ENCODE measurements at regions of chr11 and their contacts with region 1.

Region 1: GRCh38 chr11:85694386-85694980 is 8.5 kb upstream of the CCDC89 start:
- DNase-seq: no peak
- H3K4me3 ChIP-seq: no peak overlapping the region
- H3K27ac ChIP-seq: no peak overlapping the region
- H3K4me1 ChIP-seq: no peaks in the 10 kb centered on the region
- H3K27me3 ChIP-seq: no peaks in the 10 kb centered on the region
- CTCF ChIP-seq: peak; percentile 65

Region 2: GRCh38 chr11:85737748-85738147 is 43.3 kb after region 1 on chr11:
- intact Hi-C with region 1: no loop called
- DNase-seq: no peak
- H3K4me3 ChIP-seq: no peak overlapping the region
- H3K27ac ChIP-seq: peak overlapping the region; percentile 27
- H3K4me1 ChIP-seq: peaks cover 48% of the 10 kb centered on the region
- H3K27me3 ChIP-seq: no peaks in the 10 kb centered on the region
- CTCF ChIP-seq: no peak

Region 3: DNA sequence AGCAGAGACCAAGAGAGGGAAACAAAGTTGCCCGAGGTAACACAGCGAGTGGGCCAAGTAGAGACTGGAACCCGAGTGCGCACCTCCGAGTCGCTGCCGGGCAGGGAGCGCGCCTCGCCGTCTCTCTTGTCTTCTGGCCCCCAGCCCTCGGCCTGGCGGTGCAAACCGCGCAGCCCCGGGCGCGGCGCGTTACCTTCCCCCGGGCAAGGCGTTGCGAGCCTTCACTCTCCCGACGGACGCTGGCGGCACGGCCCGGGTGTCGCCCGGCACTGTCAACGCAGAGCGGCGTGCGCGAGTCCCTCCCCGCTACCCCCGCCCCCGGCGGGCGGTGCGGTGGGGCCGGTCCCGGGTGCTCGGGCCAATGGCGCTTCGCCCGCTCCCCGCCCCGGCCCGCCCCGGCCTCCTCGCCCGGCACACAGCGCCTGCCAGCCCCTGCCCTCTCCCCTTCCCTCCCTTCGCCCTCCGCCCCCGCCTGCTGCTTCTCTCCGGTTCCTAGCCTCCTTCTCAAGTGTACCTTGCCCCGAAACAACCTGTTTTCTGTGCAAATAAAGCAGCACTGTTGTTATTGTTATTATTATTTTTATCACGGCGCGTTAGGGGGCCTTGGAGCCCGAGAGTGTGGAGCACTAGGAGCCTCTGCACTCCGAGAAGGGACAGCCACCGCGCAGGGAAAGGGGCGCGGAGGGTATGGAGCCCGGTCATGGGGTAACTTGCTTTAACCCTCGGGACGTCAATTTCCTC is 116.6 kb after region 1 on chr11 and contains the start of gene SYTL2:
- intact Hi-C with region 1: loop called (anchors 10 kb)
- DNase-seq: peak; percentile 70
- H3K4me3 ChIP-seq: peak within 1 kb of the TSS; percentile 80
- H3K27ac ChIP-seq: peak within 1 kb of the TSS; percentile 28
- H3K4me1 ChIP-seq: peaks cover 17% of the 10 kb centered on the region
- H3K27me3 ChIP-seq: no peaks in the 10 kb centered on the region
- CTCF ChIP-seq: peak; percentile 30
- total RNA-seq, gene SYTL2: 3.8 TPM

Region 4: GRCh38 chr11:85961930-85962363 is 267.5 kb after region 1 on chr11:
- intact Hi-C with region 1: no loop called
- DNase-seq: no peak
- H3K4me3 ChIP-seq: no peak overlapping the region
- H3K27ac ChIP-seq: no peak overlapping the region
- H3K4me1 ChIP-seq: peaks cover 23% of the 10 kb centered on the region
- H3K27me3 ChIP-seq: no peaks in the 10 kb centered on the region
- CTCF ChIP-seq: no peak

Region 5: DNA sequence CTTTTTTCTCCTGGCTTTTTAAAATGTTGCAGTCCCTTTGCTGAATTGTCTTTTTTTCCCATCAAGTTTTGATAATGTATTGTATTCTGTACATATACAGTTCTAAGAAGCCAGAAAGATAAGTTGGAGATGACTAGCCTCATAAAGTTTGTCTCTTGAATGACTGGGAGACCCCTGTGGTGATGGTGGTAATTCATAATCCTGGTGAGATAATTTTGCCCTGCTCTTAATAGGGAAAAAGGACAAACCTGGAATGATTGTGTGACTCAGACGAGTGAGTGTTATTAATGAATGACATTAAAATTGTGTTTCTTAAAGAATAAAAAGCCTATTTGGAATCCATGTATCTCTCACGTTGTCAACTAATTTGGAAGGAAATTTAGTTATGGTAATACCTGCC is 608.8 kb after region 1 on chr11:
- intact Hi-C with region 1: no loop called
- DNase-seq: no peak
- H3K4me3 ChIP-seq: peak overlapping the region; percentile 95
- H3K27ac ChIP-seq: no peak overlapping the region
- H3K4me1 ChIP-seq: peaks cover 34% of the 10 kb centered on the region
- H3K27me3 ChIP-seq: no peaks in the 10 kb centered on the region
- CTCF ChIP-seq: no peak